Caco-2 (cell line): ENCODE measurements at regions of chr11 and their contacts with region 1.

Region 1: DNA sequence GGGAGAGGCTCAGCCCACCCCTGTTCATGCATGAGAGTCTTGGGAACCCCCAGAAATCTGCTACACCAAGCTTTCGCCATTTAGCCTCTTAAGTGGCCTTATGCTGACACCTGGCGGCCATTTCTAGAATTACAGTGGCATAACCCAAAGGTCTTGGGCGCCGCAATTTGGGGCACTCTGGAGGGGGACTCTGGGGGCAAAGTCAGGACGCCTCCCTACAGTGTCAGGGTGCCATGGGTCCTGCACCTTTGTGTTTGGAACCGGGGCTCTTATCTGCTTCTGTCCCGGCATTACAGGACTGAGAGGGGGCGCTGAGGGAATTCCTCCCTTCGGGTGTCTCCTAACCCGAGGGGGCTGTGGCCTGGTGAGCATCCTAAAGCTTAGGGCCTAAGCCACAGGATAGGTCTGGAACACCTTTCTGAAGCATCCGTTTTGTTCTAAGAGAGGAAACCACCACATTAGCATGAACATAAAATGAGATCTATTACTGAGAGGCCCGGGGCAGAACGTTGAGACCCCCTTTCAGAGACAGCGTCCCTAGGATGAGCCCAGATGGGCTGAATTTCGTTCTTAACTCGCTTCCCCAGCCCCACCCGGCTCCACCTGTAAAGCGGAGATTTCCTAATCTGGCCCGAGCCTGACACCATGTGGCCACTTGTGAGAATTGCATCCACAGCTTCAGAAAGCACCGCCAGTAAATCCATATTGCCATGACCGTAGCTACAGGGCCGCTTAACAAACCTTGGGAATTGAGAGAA is 9.3 kb downstream of the INS start:
- DNase-seq: peak; percentile 90 to 92
- H3K4me3 ChIP-seq: no peak overlapping the region
- H3K4me3 Mint-ChIP-seq: peak overlapping the region; percentile 33
- H3K27ac Mint-ChIP-seq: peak overlapping the region; percentile 65
- H3K4me1 ChIP-seq: no peaks in the 10 kb centered on the region; the same call in 1 of the 2 replicates
- H3K4me1 Mint-ChIP-seq: no peaks in the 10 kb centered on the region
- H3K27me3 ChIP-seq: no peaks in the 10 kb centered on the region
- H3K27me3 Mint-ChIP-seq: no peaks in the 10 kb centered on the region
- CTCF ChIP-seq: peak; percentile 93 to 97

Region 2: GRCh38 chr11:1827095-1827813 is 324.4 kb before region 1 on chr11:
- CTCF ChIA-PET with region 1: interaction called, 67 read pairs
- POLR2A ChIA-PET with region 1: no interaction called
- intact Hi-C with region 1: loop called (anchors 2 kb)
- DNase-seq: peak in 1 of 2 experiments; percentile 33
- H3K4me3 ChIP-seq: no peak overlapping the region
- H3K4me3 Mint-ChIP-seq: no peak overlapping the region
- H3K27ac Mint-ChIP-seq: peak overlapping the region; percentile 87
- H3K4me1 ChIP-seq: peaks cover 66% of the 10 kb centered on the region
- H3K4me1 Mint-ChIP-seq: peaks cover 39% of the 10 kb centered on the region
- H3K27me3 ChIP-seq: no peaks in the 10 kb centered on the region
- H3K27me3 Mint-ChIP-seq: no peaks in the 10 kb centered on the region
- CTCF ChIP-seq: no peak

Region 3: GRCh38 chr11:1946812-1947484 is 204.7 kb before region 1 on chr11 and contains the start of gene MRPL23:
- CTCF ChIA-PET with region 1: interaction called, 30 read pairs
- POLR2A ChIA-PET with region 1: interaction called, 3 read pairs
- intact Hi-C with region 1: no loop called
- DNase-seq: no peak
- H3K4me3 ChIP-seq: no peak within 1 kb of the TSS
- H3K4me3 Mint-ChIP-seq: no peak within 1 kb of the TSS
- H3K27ac Mint-ChIP-seq: no peak within 1 kb of the TSS
- H3K4me1 ChIP-seq: no peaks in the 10 kb centered on the region
- H3K4me1 Mint-ChIP-seq: no peaks in the 10 kb centered on the region
- H3K27me3 ChIP-seq: no peaks in the 10 kb centered on the region
- H3K27me3 Mint-ChIP-seq: no peaks in the 10 kb centered on the region
- CTCF ChIP-seq: no peak
- total RNA-seq, gene MRPL23: 7.8 and 15.0 TPM in 2 replicates

Region 4: DNA sequence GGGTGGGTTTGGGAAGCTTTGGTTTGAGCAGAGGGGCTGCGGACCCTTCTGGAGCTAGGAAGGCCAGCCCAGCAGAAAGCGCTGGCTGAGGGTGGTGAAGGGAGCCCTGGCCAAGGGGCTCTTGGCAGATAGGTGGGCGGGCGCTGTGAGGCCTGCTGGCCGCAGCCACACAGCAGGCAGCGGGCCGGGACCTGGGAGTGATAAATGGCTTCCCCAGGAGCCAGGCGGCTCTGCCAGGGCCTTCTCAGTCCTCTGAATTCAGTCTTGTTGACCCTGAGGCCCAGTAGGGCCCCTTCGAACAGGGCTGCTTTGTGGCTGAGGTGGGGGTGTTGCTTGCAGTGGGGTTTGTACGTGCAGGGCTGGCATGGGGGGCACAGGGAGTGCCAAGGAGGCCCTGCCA is 120.6 kb before region 1 on chr11:
- CTCF ChIA-PET with region 1: interaction called, 157 read pairs
- POLR2A ChIA-PET with region 1: no interaction called
- intact Hi-C with region 1: no loop called
- DNase-seq: no peak
- H3K4me3 ChIP-seq: no peak overlapping the region
- H3K4me3 Mint-ChIP-seq: no peak overlapping the region
- H3K27ac Mint-ChIP-seq: no peak overlapping the region
- H3K4me1 ChIP-seq: no peaks in the 10 kb centered on the region
- H3K4me1 Mint-ChIP-seq: no peaks in the 10 kb centered on the region
- H3K27me3 ChIP-seq: no peaks in the 10 kb centered on the region
- H3K27me3 Mint-ChIP-seq: no peaks in the 10 kb centered on the region
- CTCF ChIP-seq: no peak

Region 5: DNA sequence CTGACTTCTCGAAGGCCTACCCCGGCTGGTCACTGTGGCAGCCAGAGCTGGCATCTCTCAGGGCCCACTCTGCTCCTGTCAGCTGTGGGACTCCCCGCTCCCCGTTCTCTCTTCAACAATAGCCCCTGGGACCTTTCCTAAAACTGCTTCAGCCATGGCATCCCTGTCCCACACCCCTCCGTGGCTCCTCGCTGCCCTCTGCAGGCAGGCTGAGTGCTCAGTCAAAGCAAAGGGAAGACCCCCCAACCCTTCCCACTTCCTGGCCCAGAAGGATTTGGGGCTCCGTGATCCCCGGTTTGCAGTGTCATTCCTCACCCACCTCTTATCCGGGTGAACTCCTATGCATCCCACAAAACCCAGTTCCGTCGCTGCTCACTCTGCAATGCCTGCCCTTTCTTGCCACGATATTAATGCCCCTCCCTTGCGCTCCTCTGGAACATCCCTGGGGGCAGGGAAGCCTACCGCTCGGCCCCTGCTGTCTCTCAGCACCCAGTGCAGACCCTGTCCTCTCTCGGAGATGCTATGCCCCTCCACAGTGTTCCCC is 21.5 kb after region 1 on chr11:
- CTCF ChIA-PET with region 1: interaction called, 168 read pairs
- POLR2A ChIA-PET with region 1: no interaction called
- intact Hi-C with region 1: no loop called
- DNase-seq: no peak
- H3K4me3 ChIP-seq: no peak overlapping the region
- H3K4me3 Mint-ChIP-seq: no peak overlapping the region
- H3K27ac Mint-ChIP-seq: no peak overlapping the region
- H3K4me1 ChIP-seq: peaks cover 7% of the 10 kb centered on the region
- H3K4me1 Mint-ChIP-seq: peaks cover under 1% of the 10 kb centered on the region
- H3K27me3 ChIP-seq: no peaks in the 10 kb centered on the region
- H3K27me3 Mint-ChIP-seq: no peaks in the 10 kb centered on the region
- CTCF ChIP-seq: peak; percentile 63 to 73

Region 6: GRCh38 chr11:2208691-2209369 is 57.2 kb after region 1 on chr11:
- CTCF ChIA-PET with region 1: interaction called, 38 read pairs
- POLR2A ChIA-PET with region 1: no interaction called
- intact Hi-C with region 1: no loop called
- DNase-seq: peak; percentile 58 to 65
- H3K4me3 ChIP-seq: no peak overlapping the region
- H3K4me3 Mint-ChIP-seq: peak overlapping the region; percentile 6
- H3K27ac Mint-ChIP-seq: peak overlapping the region; percentile 75
- H3K4me1 ChIP-seq: peaks cover 82% of the 10 kb centered on the region
- H3K4me1 Mint-ChIP-seq: peaks cover 58% of the 10 kb centered on the region
- H3K27me3 ChIP-seq: no peaks in the 10 kb centered on the region
- H3K27me3 Mint-ChIP-seq: no peaks in the 10 kb centered on the region
- CTCF ChIP-seq: peak in 1 of 2 experiments; percentile 41